GM18951 (cell line): ENCODE measurements at regions of chr6 and their contacts with region 1.

Region 1: GRCh38 chr6:83514866-83515466 is 2.6 kb downstream of the PRSS35 start:
- POLR2A ChIP-seq: no peak

Region 2: DNA sequence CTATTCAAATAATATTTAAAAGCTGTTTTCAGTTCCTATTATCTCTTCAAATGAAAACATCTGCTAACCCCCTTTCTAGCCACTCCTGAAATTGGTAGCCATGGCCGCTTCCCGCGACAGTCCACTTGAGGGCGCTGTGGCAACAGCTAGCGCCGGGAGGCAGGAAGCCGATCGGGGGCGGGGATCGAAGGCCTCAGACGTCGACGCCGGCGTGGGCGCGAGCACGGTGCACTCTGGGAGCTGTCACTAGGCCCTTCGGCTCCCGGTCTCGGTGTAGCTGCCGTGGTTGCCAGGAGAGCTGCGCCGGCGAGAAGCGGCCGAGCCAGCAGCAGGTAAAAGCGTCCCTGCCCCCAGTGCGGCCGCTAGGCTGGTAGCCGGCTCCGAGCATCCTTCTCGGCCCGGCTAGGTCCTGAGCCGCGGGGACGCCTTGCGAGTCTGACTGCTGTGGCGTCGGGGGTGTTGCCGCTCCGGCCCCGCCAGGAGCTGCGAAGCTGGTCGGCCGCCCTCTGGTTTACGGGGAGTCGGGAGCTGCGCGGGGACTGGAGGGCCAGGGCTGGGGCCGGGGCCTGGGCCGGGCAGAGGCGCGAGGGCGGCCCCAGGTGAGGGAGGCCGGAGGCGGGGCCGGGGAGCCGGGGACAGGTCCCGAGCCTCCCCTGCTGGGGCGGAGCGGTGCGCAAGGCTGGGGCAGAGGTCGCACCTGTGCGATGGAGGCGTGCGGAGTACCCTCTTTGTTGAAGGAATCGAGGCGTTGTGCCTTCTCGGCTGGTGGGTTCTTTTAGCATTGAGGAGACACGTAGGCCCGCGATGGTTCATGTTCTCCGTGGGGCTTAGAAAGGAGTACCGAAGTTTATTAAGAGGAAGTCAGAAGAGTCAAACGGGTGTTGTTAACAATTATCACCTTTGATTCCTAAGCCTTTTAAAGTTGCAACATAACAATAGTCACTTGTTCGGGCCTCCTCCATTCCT is 447.2 kb before region 1 on chr6 and contains the start of gene DOP1A:
- in situ Hi-C with region 1: loop called (anchors 10 kb)
- POLR2A ChIP-seq: peak; percentile 74

Region 3: GRCh38 chr6:83221889-83222479 is 293.0 kb before region 1 on chr6:
- in situ Hi-C with region 1: loop called (anchors 5 kb)
- POLR2A ChIP-seq: no peak